ENCODE measurements at regions of chr18 and their contacts with region 1.

Region 1: GRCh38 chr18:61333746-61334490 is 688 bp downstream of the CDH20 start:
- DNase-seq: peak in 41 of 42 donors; percentile 21 to 83 (median 61)

Region 2: GRCh38 chr18:61274561-61274960 is 59.4 kb before region 1 on chr18:
- intact Hi-C with region 1: no loop called
- DNase-seq: no peak

Region 3: GRCh38 chr18:61413396-61413795 is 79.5 kb after region 1 on chr18:
- intact Hi-C with region 1: loop called (anchors 10 kb)
- DNase-seq: peak in 15 of 42 donors; percentile 10 to 72 (median 36)

Region 4: GRCh38 chr18:61882296-61883004 is 548.5 kb after region 1 on chr18:
- intact Hi-C with region 1: no loop called
- DNase-seq: no peak

Measured in head of caudate nucleus (tissue), 42 donors.